GM12878 (cell line): ENCODE measurements at regions of chr1 and their contacts with region 1.

Region 1: GRCh38 chr1:15046487-15047165 is 106.9 kb upstream of the TMEM51 start:
- DNase-seq: peak; percentile 24
- ATAC-seq: peak; percentile 94
- H3K4me3 ChIP-seq: no peak overlapping the region
- H3K27ac ChIP-seq: no peak overlapping the region
- H3K4me1 ChIP-seq: no peaks in the 10 kb centered on the region
- H3K27me3 ChIP-seq: no peaks in the 10 kb centered on the region
- CTCF ChIP-seq: peak; percentile 86 to 93 (median 89); a peak in 5 of 6 replicates
- EP300 ChIP-seq: no peak
- POLR2A ChIP-seq: no peak
- RAD21 ChIP-seq: peak; percentile 86

Region 2: DNA sequence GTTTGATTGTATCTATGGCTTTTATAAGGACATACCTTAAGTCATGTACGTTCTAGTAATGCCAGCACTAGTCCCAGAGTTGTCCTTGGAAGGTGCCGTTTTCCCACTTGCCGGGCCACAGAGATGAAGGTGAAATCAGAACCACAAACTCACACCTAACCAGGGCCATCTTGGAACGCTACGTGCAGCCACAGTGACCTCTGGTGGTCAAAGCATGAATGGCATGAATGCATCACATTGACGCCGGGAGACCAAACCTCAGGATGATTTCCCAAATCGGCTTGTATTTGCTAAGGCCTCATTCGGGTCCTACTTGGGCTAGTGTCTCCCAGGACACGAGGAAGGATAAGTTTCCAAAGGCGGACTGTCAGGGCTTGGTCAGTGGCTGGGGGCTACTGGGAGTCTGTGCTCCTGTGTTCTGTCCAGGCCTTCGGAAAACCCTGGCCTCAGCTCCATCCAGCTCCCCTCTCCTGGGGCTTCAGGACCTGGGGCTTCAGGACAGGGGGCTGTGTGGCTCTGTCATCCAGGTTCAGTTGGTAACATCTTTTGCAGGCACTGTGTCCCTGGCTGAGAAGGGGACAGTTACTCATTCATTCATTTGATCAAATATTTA is 1086.1 kb before region 1 on chr1:
- CTCF ChIA-PET with region 1: interaction called, 4 read pairs
- POLR2A ChIA-PET with region 1: no interaction called
- RAD21 ChIA-PET with region 1: no interaction called
- SMC1A ChIA-PET with region 1: no interaction called
- in situ Hi-C with region 1: no loop called
- intact Hi-C with region 1: loop called (anchors 10 kb)
- DNase-seq: peak; percentile 17
- ATAC-seq: peak; percentile 85
- H3K4me3 ChIP-seq: no peak overlapping the region
- H3K27ac ChIP-seq: no peak overlapping the region
- H3K4me1 ChIP-seq: no peaks in the 10 kb centered on the region
- H3K27me3 ChIP-seq: no peaks in the 10 kb centered on the region; a peak in 1 of 4 replicates
- CTCF ChIP-seq: peak; percentile 94 to 96 (median 95)
- EP300 ChIP-seq: no peak
- POLR2A ChIP-seq: no peak
- RAD21 ChIP-seq: peak; percentile 96

Region 3: GRCh38 chr1:14113841-14114567 is 932.6 kb before region 1 on chr1:
- CTCF ChIA-PET with region 1: no interaction called
- POLR2A ChIA-PET with region 1: no interaction called
- RAD21 ChIA-PET with region 1: interaction called, 4 read pairs
- SMC1A ChIA-PET with region 1: no interaction called
- in situ Hi-C with region 1: no loop called
- intact Hi-C with region 1: loop called (anchors 5 kb)
- DNase-seq: no peak
- ATAC-seq: peak; percentile 48; the same call in 2 of the 3 replicates
- H3K4me3 ChIP-seq: no peak overlapping the region
- H3K27ac ChIP-seq: no peak overlapping the region
- H3K4me1 ChIP-seq: no peaks in the 10 kb centered on the region
- H3K27me3 ChIP-seq: no peaks in the 10 kb centered on the region
- CTCF ChIP-seq: peak; percentile 29 to 58 (median 50); a peak in 4 of 6 replicates
- EP300 ChIP-seq: no peak
- POLR2A ChIP-seq: no peak
- RAD21 ChIP-seq: peak; percentile 57

Region 4: DNA sequence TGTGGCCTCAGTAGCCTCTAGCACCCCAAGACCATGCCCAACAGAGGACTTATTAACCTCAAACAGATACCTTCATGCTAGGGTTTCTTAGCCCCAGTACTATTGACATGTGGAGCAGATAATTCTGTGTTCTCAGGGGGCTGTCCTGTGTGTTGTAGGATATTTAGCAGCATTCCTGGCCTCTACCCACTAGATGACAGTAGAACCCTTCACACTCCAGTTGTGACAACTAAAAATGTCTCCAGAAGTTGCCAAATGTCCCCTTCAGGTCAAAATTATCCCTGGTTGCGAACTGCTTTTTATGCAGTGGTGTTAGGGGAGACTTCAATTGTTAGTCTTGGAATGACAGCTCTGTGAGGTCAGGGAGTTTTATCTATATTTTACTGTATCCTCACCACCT is 440.0 kb before region 1 on chr1:
- CTCF ChIA-PET with region 1: no interaction called
- POLR2A ChIA-PET with region 1: no interaction called
- RAD21 ChIA-PET with region 1: interaction called, 3 read pairs
- SMC1A ChIA-PET with region 1: no interaction called
- in situ Hi-C with region 1: no loop called
- intact Hi-C with region 1: loop called (anchors 5 kb)
- DNase-seq: no peak
- ATAC-seq: peak; percentile 38; the same call in 1 of the 3 replicates
- H3K4me3 ChIP-seq: no peak overlapping the region
- H3K27ac ChIP-seq: no peak overlapping the region
- H3K4me1 ChIP-seq: no peaks in the 10 kb centered on the region
- H3K27me3 ChIP-seq: no peaks in the 10 kb centered on the region
- CTCF ChIP-seq: peak; percentile 32 to 62 (median 48); a peak in 5 of 6 replicates
- EP300 ChIP-seq: no peak
- POLR2A ChIP-seq: no peak
- RAD21 ChIP-seq: peak; percentile 70

Region 5: DNA sequence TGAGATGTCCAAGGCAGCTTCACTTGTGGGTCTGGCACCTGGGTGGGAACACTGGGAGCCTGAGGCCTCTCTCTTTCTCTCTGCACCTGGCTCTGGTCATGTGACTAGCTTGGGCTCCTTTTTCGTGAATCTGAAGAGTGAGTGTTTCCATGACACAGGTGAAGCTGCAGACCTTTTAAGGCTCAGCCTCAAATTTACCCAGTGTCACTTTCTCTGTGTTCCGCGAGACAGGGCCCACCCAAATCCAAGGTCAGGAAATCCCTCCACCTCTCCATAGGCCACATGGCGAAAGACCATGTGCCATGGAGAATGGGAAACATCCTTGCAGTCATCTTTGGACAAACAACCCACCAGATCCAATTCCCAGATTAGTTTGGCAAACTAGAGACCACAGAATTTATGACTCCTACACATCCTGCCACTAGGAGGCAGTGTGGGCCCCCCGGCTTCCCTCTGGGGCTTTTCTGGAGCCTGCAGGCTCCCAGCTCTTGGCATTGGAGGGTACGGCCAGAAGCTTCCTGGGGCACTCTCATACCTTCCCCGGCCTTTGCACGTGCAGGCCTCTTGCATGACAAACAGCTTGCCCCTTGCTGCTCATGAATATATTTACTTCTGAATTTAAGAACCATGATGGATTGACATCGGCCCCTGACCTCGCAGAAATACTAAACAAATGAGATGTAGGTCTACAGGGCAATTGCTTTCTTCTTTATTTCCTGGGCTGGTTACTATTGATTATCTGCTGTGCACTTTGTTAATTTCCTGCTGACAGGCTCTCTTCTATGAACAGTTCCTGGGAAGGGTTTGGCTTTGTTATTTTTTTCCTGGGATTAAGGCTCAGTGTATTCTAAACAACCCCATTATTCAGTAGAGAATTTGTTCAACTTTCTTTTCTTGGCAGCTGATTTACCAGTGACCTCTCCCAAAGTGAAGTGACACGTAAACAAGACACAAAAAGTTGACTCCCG is 267.4 kb before region 1 on chr1:
- CTCF ChIA-PET with region 1: interaction called, 4 read pairs
- POLR2A ChIA-PET with region 1: no interaction called
- RAD21 ChIA-PET with region 1: no interaction called
- SMC1A ChIA-PET with region 1: no interaction called
- in situ Hi-C with region 1: no loop called
- intact Hi-C with region 1: loop called (anchors 5 kb)
- DNase-seq: no peak
- ATAC-seq: peak; percentile 48; the same call in 1 of the 3 replicates
- H3K4me3 ChIP-seq: no peak overlapping the region
- H3K27ac ChIP-seq: no peak overlapping the region
- H3K4me1 ChIP-seq: no peaks in the 10 kb centered on the region
- H3K27me3 ChIP-seq: no peaks in the 10 kb centered on the region
- CTCF ChIP-seq: peak; percentile 49 to 75 (median 73)
- EP300 ChIP-seq: no peak
- POLR2A ChIP-seq: no peak
- RAD21 ChIP-seq: peak; percentile 55

Region 6: GRCh38 chr1:14915356-14916054 is 131.1 kb before region 1 on chr1:
- CTCF ChIA-PET with region 1: interaction called, 3 read pairs
- POLR2A ChIA-PET with region 1: no interaction called
- RAD21 ChIA-PET with region 1: no interaction called
- SMC1A ChIA-PET with region 1: no interaction called
- in situ Hi-C with region 1: no loop called
- intact Hi-C with region 1: loop called (anchors 10 kb)
- DNase-seq: no peak
- ATAC-seq: peak; percentile 71
- H3K4me3 ChIP-seq: no peak overlapping the region
- H3K27ac ChIP-seq: no peak overlapping the region
- H3K4me1 ChIP-seq: peaks cover 9% of the 10 kb centered on the region
- H3K27me3 ChIP-seq: no peaks in the 10 kb centered on the region
- CTCF ChIP-seq: peak; percentile 61 to 93 (median 87)
- EP300 ChIP-seq: no peak
- POLR2A ChIP-seq: no peak
- RAD21 ChIP-seq: peak; percentile 28; the same call in 1 of the 2 replicates

Region 7: GRCh38 chr1:14946684-14947501 is 99.7 kb before region 1 on chr1:
- CTCF ChIA-PET with region 1: no interaction called
- POLR2A ChIA-PET with region 1: no interaction called
- RAD21 ChIA-PET with region 1: no interaction called
- SMC1A ChIA-PET with region 1: no interaction called
- in situ Hi-C with region 1: no loop called
- intact Hi-C with region 1: no loop called
- DNase-seq: no peak
- ATAC-seq: no peak
- H3K4me3 ChIP-seq: no peak overlapping the region
- H3K27ac ChIP-seq: no peak overlapping the region
- H3K4me1 ChIP-seq: no peaks in the 10 kb centered on the region
- H3K27me3 ChIP-seq: no peaks in the 10 kb centered on the region; a peak in 1 of 4 replicates
- CTCF ChIP-seq: no peak
- EP300 ChIP-seq: no peak
- POLR2A ChIP-seq: no peak
- RAD21 ChIP-seq: no peak

Region 8: GRCh38 chr1:15028102-15028501 is 18.5 kb before region 1 on chr1:
- CTCF ChIA-PET with region 1: interaction called, 11 read pairs
- POLR2A ChIA-PET with region 1: no interaction called
- RAD21 ChIA-PET with region 1: interaction called, 5 read pairs
- SMC1A ChIA-PET with region 1: no interaction called
- in situ Hi-C with region 1: no loop called
- intact Hi-C with region 1: no loop called
- DNase-seq: no peak
- ATAC-seq: no peak
- H3K4me3 ChIP-seq: no peak overlapping the region
- H3K27ac ChIP-seq: no peak overlapping the region
- H3K4me1 ChIP-seq: no peaks in the 10 kb centered on the region
- H3K27me3 ChIP-seq: no peaks in the 10 kb centered on the region
- CTCF ChIP-seq: no peak
- EP300 ChIP-seq: no peak
- POLR2A ChIP-seq: no peak
- RAD21 ChIP-seq: no peak

Region 9: DNA sequence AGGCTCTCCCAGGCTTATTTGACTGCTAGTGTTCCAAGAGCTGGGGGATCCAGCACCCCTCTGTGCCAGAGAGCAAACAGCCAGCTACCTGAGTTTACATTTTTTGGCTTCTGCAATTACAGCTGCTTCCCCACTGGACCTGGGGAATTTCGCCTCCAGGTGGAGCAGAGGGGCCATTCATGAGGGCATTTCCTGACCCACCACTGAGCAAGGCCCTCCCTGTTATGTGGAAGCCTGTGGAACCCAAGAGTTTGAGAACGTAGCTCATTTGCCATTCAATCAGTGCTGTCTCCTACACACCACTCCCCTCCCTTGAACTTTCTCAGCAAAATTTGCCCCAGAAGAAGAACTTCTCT is 64.2 kb after region 1 on chr1:
- CTCF ChIA-PET with region 1: no interaction called
- POLR2A ChIA-PET with region 1: no interaction called
- RAD21 ChIA-PET with region 1: no interaction called
- SMC1A ChIA-PET with region 1: no interaction called
- in situ Hi-C with region 1: no loop called
- intact Hi-C with region 1: no loop called
- DNase-seq: no peak
- ATAC-seq: no peak
- H3K4me3 ChIP-seq: no peak overlapping the region
- H3K27ac ChIP-seq: no peak overlapping the region
- H3K4me1 ChIP-seq: peaks cover 4% of the 10 kb centered on the region
- H3K27me3 ChIP-seq: no peaks in the 10 kb centered on the region
- CTCF ChIP-seq: peak in 1 of 3 experiments; percentile 13; a peak in 1 of 6 replicates
- EP300 ChIP-seq: no peak
- POLR2A ChIP-seq: no peak
- RAD21 ChIP-seq: no peak

Region 10: DNA sequence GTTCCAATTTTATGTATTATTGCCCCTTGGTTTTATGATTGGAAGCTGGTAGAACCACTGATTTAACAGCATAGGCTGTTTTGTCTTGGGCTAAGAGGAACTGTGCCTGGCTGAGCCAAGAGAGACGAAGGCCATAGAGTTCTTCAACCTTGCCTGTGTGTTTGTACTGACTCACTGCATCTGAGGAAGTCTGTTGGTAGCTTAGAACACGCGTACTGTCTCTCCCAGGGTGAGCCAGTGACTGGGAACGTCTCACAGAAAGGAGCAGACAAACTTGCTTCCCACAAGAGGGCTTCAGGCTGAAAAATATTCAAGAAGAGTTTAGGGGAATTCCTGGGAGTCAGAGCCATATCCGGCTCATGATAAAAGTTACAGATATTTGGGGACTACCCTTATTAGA is 121.9 kb after region 1 on chr1:
- CTCF ChIA-PET with region 1: no interaction called
- POLR2A ChIA-PET with region 1: no interaction called
- RAD21 ChIA-PET with region 1: no interaction called
- SMC1A ChIA-PET with region 1: no interaction called
- in situ Hi-C with region 1: no loop called
- intact Hi-C with region 1: no loop called
- DNase-seq: peak; percentile 63
- ATAC-seq: peak; percentile 82
- H3K4me3 ChIP-seq: no peak overlapping the region
- H3K27ac ChIP-seq: peak overlapping the region; percentile 47
- H3K4me1 ChIP-seq: peaks cover 13% of the 10 kb centered on the region
- H3K27me3 ChIP-seq: no peaks in the 10 kb centered on the region
- CTCF ChIP-seq: no peak
- EP300 ChIP-seq: no peak
- POLR2A ChIP-seq: no peak
- RAD21 ChIP-seq: no peak